ENCODE measurements at regions of chr18 and their contacts with region 1.

Region 1: GRCh38 chr18:48675352-48675761 is 136.5 kb downstream of the CTIF start:
- DNase-seq: peak; percentile 88 to 93
- ATAC-seq: peak; percentile 91 to 97 (median 95)
- H3K4me3 ChIP-seq: no peak overlapping the region
- H3K27ac ChIP-seq: peak overlapping the region; percentile 23
- H3K4me1 ChIP-seq: peaks cover 32% of the 10 kb centered on the region
- H3K27me3 ChIP-seq: no peaks in the 10 kb centered on the region
- CTCF ChIP-seq: peak; percentile 95

Region 2: DNA sequence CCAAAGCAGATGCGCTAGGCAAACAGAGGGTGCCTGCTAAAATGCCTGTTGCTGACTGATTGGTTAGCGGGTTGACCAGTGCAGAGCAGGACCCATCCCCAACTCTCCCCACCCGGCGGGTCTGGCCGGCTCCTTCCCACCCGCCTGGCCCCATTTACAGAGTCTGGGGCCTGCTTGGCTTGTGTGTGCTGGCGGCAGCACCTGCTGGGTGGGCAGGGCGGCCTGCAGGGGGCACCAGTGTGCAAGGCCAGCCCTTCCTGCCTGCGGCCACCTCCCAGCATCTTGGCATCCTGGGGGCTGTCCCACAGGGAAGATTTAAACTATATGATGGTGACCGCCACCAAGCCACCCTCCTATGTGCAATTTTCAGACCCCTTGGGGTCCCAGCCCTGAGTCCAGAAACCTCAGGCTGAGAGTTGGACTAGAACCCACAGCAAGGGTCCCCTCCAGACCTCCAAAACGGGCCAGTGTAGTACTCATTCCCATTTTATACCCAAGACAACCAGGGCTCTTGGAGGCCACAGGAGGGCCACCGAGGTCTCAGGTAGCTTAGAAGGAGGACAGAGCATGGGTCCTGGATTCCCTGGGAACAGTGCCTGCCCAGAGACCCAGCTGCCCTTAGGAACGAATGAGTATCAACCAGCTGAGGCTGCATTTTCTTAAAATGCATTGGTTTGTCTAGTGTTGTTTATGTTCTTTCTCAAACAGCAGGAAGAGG is 101.8 kb after region 1 on chr18:
- intact Hi-C with region 1: loop called in 1 of 2 experiments (anchors 5 kb)
- DNase-seq: peak; percentile 63 to 81
- ATAC-seq: peak; percentile 62 to 69 (median 64)
- H3K4me3 ChIP-seq: no peak overlapping the region
- H3K27ac ChIP-seq: no peak overlapping the region
- H3K4me1 ChIP-seq: peaks cover 43% of the 10 kb centered on the region
- H3K27me3 ChIP-seq: no peaks in the 10 kb centered on the region
- CTCF ChIP-seq: peak; percentile 82

Region 3: GRCh38 chr18:48940854-48941611 is 265.7 kb after region 1 on chr18:
- intact Hi-C with region 1: no loop called
- DNase-seq: no peak
- ATAC-seq: no peak
- H3K4me3 ChIP-seq: peak overlapping the region; percentile 15
- H3K27ac ChIP-seq: peak overlapping the region; percentile 58
- H3K4me1 ChIP-seq: peaks cover 90% of the 10 kb centered on the region
- H3K27me3 ChIP-seq: no peaks in the 10 kb centered on the region
- CTCF ChIP-seq: no peak

Region 4: GRCh38 chr18:49041435-49042245 is 366.3 kb after region 1 on chr18:
- intact Hi-C with region 1: loop called (anchors 5 to 10 kb)
- DNase-seq: peak in 1 of 2 donors; percentile 52
- ATAC-seq: peak; percentile 47 to 78 (median 62)
- H3K4me3 ChIP-seq: no peak overlapping the region
- H3K27ac ChIP-seq: no peak overlapping the region
- H3K4me1 ChIP-seq: no peaks in the 10 kb centered on the region
- H3K27me3 ChIP-seq: no peaks in the 10 kb centered on the region
- CTCF ChIP-seq: peak; percentile 67

Region 5: GRCh38 chr18:49238433-49239042 is 563.2 kb after region 1 on chr18:
- intact Hi-C with region 1: loop called in 1 of 2 experiments (anchors 5 kb)
- DNase-seq: no peak
- ATAC-seq: no peak
- H3K4me3 ChIP-seq: no peak overlapping the region
- H3K27ac ChIP-seq: no peak overlapping the region
- H3K4me1 ChIP-seq: no peaks in the 10 kb centered on the region
- H3K27me3 ChIP-seq: no peaks in the 10 kb centered on the region
- CTCF ChIP-seq: peak; percentile 27

Region 6: DNA sequence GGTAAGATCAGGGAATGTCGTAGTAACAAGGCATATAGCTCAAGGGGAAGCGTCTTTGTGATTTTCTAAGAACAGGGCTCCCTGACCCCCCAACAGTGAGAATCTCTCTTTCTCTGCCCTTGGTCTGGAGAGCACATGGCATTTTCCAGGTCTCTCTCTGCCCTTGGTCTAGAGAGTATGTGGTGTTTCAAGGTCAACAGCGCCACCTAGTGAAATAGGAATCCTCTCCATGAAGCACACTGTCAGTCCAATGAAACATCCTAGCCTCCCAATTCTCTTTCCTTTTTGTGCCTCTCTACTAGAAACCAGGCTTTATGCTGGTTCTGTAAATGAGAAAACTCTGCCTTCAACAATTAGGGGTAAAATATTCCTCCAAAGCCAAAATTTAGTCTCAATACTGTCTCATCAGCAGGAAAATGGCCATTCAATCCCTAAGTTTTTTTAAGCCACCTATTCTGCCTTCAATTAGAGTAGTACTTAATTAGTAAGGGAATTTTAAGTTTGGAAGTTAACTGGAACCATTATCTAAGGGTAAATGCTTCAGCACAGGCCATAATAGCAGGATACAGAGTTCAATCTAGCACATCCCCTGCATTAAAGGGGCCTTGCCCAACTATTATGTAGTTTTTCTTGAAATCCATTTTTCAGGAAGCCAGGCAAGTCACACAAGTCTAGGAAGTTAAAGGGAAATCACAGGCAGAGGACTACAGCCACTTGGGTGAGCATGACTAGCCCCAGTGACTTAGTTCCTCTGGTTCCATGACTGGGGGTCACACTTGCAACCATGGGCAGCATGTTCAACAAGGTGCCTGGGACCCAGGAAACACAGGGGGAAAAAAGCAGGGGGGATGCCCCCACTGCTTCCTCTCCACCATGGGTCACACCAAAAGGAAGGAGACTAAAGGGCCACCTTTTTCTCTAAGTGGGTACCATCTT is 772.7 kb after region 1 on chr18:
- intact Hi-C with region 1: loop called (anchors 10 kb)
- DNase-seq: no peak
- ATAC-seq: peak; percentile 61 to 81 (median 77)
- H3K4me3 ChIP-seq: no peak overlapping the region
- H3K27ac ChIP-seq: no peak overlapping the region
- H3K4me1 ChIP-seq: peaks cover 11% of the 10 kb centered on the region
- H3K27me3 ChIP-seq: no peaks in the 10 kb centered on the region
- CTCF ChIP-seq: peak; percentile 47

Region 7: DNA sequence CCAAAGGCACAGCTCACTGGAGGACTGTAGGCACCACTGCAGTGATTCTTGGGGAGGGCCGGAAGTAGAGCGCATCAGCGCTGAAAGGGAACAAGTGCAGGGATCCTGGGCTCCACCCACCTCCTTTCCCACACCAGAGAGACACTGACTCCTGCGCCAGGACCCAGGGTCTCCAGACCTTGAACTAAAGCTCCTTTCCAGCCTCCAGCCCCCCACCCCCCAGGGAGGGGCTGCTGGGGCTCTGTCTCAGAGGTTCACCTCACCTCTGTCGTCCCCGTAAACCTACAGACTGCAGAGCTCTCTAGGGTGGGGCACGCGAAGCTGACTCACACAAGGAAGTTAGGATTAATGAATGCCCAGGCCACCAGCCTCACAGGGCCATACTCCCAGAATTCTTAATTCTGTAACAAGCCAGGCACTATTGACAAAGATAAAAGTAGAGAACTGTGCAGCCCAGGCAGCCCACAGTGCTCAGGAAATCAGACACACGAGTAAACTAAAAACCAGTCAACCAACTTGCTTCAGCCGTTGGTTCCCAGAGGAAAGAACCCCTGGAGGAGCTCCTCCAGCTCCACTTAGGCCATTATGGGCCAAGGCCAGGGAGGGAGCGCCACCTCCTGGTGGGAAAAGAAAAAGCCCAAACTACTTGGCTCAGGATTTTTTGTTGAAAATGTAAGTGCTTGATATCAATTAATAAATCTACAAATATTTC is 1183.1 kb after region 1 on chr18:
- intact Hi-C with region 1: loop called in 1 of 2 experiments (anchors 10 kb)
- DNase-seq: peak; percentile 52 to 73
- ATAC-seq: peak; percentile 69 to 77 (median 74)
- H3K4me3 ChIP-seq: no peak overlapping the region
- H3K27ac ChIP-seq: no peak overlapping the region
- H3K4me1 ChIP-seq: no peaks in the 10 kb centered on the region
- H3K27me3 ChIP-seq: no peaks in the 10 kb centered on the region
- CTCF ChIP-seq: peak; percentile 93